PC-9 (cell line): ENCODE measurements at regions of chr12 and their contacts with region 1.

Region 1: GRCh38 chr12:59808317-59808910 is 212.6 kb downstream of the SLC16A7 start:
- DNase-seq: peak in 1 of 2 experiments; percentile 39
- H3K4me3 ChIP-seq: no peak overlapping the region
- H3K27ac ChIP-seq: no peak overlapping the region
- H3K4me1 ChIP-seq: no peaks in the 10 kb centered on the region
- H3K27me3 ChIP-seq: no peaks in the 10 kb centered on the region
- CTCF ChIP-seq: peak; percentile 85

Region 2: DNA sequence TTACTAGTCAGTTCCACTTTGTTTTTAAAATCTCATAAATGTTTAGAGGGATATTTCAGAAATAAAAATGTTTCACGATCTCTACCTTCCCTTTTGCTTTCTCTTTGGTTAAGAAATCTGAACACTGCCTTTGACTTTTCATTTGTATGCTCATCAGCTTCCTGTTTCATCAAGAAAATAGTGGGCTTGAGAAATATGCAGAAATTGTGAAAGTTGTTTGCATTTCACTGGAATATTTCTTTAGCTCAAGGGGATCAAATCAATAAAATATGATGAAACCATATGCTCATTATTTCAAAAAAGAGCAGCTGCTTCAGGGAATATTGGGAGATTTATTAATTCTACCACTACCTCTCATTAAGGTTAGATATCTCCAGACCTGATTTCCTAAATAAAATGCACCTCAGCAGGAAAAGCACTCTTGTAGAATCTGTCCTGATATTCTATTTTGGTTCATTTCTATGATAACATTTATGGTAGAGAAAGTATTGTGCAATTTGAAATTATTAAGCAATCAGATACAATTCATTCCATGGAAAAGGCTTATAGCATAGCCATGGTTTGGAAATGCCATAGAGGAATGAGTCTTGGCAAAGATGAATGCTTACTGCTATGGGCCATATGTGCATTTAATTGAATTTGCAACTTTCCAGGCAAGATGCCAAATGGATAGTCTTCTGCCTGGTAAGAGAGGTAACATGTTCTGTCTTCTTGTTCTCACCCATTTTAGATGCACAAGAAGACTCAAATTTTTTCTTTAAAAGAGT is 425.2 kb before region 1 on chr12:
- CTCF ChIA-PET with region 1: no interaction called
- POLR2A ChIA-PET with region 1: no interaction called
- intact Hi-C with region 1: no loop called
- DNase-seq: no peak
- H3K4me3 ChIP-seq: no peak overlapping the region
- H3K27ac ChIP-seq: no peak overlapping the region
- H3K4me1 ChIP-seq: no peaks in the 10 kb centered on the region
- H3K27me3 ChIP-seq: no peaks in the 10 kb centered on the region
- CTCF ChIP-seq: no peak

Region 3: DNA sequence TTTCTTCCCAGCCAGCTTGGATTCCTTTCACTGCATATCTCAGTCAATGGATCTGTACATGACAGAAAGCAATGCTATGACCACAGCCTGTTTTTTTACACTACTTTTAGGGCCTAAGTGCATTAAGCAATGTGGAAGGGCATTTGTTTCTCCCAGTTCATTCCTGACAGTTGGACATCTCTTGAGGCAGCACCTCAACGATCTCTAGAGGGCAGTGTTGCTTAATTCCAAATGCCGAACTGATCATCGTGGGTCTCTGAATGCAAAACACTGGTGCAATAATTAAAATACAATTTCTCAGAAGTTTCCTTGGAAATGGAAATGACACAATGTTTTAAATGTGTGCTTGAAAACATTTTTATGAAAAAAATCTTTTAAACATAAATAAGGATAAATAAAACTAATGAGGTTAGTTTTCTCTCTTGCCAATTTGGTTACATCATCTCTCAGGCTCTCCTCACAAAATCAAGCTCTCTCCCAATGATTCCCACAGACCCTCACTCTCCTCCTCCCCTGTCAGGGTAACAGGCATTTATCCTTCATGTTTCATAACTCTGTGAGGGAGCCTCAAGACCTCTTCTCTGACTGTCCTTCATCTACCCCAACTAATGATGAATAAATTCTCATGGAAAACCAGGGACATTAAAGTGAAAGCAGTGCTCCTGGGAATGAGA is 405.0 kb before region 1 on chr12:
- CTCF ChIA-PET with region 1: no interaction called
- POLR2A ChIA-PET with region 1: no interaction called
- intact Hi-C with region 1: loop called (anchors 10 kb)
- DNase-seq: peak in 1 of 2 experiments; percentile 36
- H3K4me3 ChIP-seq: no peak overlapping the region
- H3K27ac ChIP-seq: no peak overlapping the region
- H3K4me1 ChIP-seq: no peaks in the 10 kb centered on the region
- H3K27me3 ChIP-seq: no peaks in the 10 kb centered on the region
- CTCF ChIP-seq: peak; percentile 78

Region 4: DNA sequence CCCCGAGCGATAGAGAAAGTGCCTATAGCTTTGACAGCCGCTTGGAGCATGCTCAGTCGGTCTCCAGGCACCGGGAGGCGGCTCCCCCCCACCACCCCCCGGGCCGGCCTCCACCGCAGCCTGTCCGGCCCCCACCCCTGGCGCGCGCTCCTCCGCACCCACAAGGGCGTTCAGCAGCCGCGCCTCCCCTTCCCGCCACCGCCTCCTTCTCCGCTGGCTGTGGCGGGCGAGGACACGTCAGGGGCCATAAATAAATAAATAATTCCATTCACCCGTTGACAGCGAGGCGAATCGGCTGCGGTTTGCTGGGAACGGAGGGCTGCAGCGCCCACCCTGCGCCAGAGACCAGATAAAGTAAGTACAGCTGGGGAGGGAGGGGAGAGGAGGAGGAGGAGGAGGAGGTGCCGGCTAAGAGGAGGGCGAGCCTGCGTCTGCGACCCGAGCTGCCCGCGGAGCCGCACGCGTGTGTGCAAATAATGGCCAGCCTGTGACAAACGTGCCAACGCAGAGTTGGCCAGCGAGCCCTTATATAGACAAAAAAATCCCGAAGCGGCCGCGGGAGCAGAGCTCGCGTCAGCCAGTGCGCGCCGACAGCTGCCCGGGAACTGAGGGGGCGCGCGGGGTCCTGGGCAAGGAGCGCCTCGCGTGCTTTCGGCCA is 212.4 kb before region 1 on chr12 and contains the start of gene SLC16A7:
- CTCF ChIA-PET with region 1: no interaction called
- POLR2A ChIA-PET with region 1: interaction called, 6 read pairs
- intact Hi-C with region 1: loop called (anchors 10 kb)
- DNase-seq: peak; percentile 36 to 73
- H3K4me3 ChIP-seq: peak within 1 kb of the TSS; percentile 66
- H3K27ac ChIP-seq: no peak within 1 kb of the TSS; the same call in 1 of the 2 replicates
- H3K4me1 ChIP-seq: peaks cover 10% of the 10 kb centered on the region; the same call in 1 of the 2 replicates
- H3K27me3 ChIP-seq: peaks cover 8% of the 10 kb centered on the region; the same call in 1 of the 2 replicates
- CTCF ChIP-seq: no peak
- total RNA-seq, gene SLC16A7: 2.7 and 5.0 TPM in 2 replicates